Heart right ventricle (tissue), 16 donors: ENCODE measurements at regions of chr15 and their contacts with region 1.

Region 1: GRCh38 chr15:68126396-68126795 is 72.3 kb downstream of the PIAS1 start:
- DNase-seq: peak; percentile 32 to 64
- ATAC-seq: peak; percentile 55 to 90 (median 81)
- H3K4me3 ChIP-seq: no peak overlapping the region
- H3K27ac ChIP-seq: peak overlapping the region in 5 of 10 donors; percentile 3 to 51 (median 34)
- H3K4me1 ChIP-seq: peaks cover 0 to 66% (median 18%) of the 10 kb centered on the region in 9 donors
- H3K27me3 ChIP-seq: no peaks in the 10 kb centered on the region
- CTCF ChIP-seq: no peak

Region 2: DNA sequence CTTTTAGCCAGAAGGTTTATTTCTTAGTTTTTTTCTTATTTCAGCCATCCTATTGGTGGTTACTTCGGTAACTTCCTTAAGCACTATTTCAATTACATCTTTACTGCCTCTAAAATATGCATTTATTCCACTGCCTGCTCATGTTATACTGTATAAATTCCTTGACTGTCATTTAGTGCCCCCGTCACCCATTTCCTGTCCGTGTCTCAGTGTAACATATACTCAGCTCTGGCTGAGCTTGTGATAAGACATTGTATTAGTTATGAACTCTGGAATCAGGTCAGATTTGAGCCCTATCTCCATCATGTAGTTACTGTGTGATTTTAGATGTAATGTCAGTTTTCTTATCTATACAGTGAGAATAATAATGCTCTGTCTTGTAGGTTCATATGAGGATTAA is 48.0 kb before region 1 on chr15:
- intact Hi-C with region 1: loop called in 1 of 10 experiments (anchors 10 kb)
- DNase-seq: no peak
- ATAC-seq: no peak
- H3K4me3 ChIP-seq: no peak overlapping the region
- H3K27ac ChIP-seq: no peak overlapping the region
- H3K4me1 ChIP-seq: peaks cover 7 to 82% (median 59%) of the 10 kb centered on the region in 9 donors
- H3K27me3 ChIP-seq: no peaks in the 10 kb centered on the region
- CTCF ChIP-seq: no peak

Region 3: DNA sequence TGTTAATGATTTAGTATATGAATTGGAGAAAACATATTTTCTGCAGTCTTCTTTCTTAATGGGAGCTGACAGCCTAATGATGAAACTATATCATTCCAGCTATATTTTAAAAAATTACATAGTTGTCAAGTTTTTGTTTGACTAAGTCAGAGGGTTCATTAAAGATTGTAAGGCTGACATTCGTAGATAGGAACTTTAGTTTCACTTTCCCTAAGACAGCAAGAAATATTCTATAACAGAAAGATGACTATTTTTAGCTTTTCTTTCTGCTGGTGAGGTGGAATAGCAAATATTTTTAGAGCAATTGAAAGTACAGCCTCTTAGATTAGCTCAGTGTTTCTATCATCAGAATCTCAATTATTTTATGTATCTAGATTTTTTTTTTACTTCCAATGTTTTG is 12.0 kb before region 1 on chr15:
- intact Hi-C with region 1: loop called in 1 of 10 experiments (anchors 1 kb)
- DNase-seq: no peak
- ATAC-seq: peak in 6 of 8 donors; percentile 29 to 77 (median 58)
- H3K4me3 ChIP-seq: peak overlapping the region in 9 of 10 donors; percentile 6 to 52 (median 39)
- H3K27ac ChIP-seq: peak overlapping the region in 9 of 10 donors; percentile 3 to 79 (median 51)
- H3K4me1 ChIP-seq: peaks cover 0 to 47% (median 37%) of the 10 kb centered on the region in 9 donors
- H3K27me3 ChIP-seq: no peaks in the 10 kb centered on the region
- CTCF ChIP-seq: no peak

Region 4: DNA sequence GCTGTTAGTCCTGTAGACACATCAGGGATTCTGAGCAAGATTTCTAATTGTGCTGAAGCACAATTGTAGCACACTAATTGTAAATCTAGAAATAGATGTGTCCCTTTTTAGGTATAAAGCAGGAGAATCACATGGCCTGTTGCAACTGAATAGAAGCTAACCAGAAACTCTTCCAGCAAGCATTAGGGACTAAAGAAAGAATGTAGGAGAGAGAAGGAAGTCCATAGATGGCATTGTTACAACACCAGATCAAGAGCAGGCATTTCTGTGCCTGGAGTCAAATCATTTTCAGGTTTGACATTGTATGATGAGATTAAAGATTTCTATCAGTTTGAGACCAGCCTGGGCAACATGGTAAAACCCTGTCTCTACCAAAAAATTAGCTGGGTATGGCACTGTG is 51.3 kb after region 1 on chr15:
- intact Hi-C with region 1: no loop called
- DNase-seq: no peak
- ATAC-seq: peak in 2 of 8 donors; percentile 45 to 51
- H3K4me3 ChIP-seq: no peak overlapping the region
- H3K27ac ChIP-seq: peak overlapping the region in 1 of 10 donors; percentile 24
- H3K4me1 ChIP-seq: peaks cover 0 to 12% (median 0%) of the 10 kb centered on the region in 9 donors
- H3K27me3 ChIP-seq: no peaks in the 10 kb centered on the region
- CTCF ChIP-seq: no peak